Motor neuron (in vitro differentiated cells): ENCODE measurements at regions of chr4 and their contacts with region 1.

Region 1: DNA sequence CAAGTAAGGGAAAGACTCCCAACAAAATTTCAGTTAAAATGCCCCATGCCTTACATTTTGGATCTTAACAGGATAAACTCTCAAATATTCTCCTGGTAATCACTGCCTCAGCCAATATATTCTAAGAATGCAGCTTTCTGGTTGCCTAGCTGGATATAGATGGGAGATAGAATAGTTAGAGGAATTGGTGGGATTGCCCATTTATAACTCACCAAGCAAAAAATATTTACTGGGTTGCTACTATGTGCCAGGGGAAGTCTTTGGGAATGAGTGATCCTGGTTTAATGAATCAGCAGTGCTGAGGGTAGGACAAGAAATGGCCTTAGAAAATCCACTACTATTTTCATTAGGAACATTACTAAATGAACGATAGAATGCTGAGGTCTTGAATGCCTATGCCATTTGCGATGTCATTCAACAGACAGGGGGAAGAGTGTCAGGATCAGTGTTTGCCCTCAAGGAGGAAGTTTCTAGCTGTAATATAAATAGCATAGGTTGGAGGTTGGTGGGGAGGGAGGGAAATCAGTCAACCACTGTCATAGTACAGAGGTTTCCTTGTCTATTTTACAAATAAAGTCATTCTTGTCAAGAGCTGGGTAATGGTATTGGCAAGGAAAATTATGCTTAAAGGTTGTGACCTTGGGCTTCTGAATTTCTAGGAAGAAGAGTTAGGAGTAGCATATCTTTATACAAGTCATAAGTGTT is 63.5 kb downstream of the ENOPH1 start:
- ATAC-seq: no peak
- H3K4me3 ChIP-seq: no peak overlapping the region
- H3K27ac ChIP-seq: no peak overlapping the region
- H3K4me1 ChIP-seq: peaks cover under 1 to 4% of the 10 kb centered on the region in 2 donors

Region 2: DNA sequence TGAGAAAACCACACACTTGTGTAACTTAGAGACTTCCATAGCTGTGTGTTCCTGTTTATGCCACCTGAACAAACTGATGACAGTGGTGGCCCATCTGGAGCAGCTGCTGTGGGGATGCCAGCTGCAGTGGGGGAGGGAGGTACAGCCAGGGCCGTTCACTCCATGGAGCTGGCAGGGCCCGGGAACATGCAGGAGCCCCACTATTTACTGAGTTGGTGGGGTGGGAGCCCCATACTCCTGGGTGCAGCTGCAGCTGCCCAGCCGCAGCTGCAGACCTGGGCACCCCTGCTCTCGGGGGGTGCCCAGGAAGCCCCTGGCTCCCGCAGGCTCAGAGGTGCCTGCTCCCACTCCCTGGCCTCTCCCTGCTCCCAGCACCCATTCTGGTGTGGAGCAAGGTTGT is 623.6 kb before region 1 on chr4:
- in situ Hi-C with region 1: no loop called
- ATAC-seq: no peak
- H3K4me3 ChIP-seq: no peak overlapping the region
- H3K27ac ChIP-seq: no peak overlapping the region
- H3K4me1 ChIP-seq: peaks cover 18 to 29% of the 10 kb centered on the region in 2 donors

Region 3: GRCh38 chr4:82739316-82740179 is 245.7 kb after region 1 on chr4:
- in situ Hi-C with region 1: loop called in 1 of 9 experiments (anchors 25 kb)
- ATAC-seq: peak; percentile 42 to 100 (median 78)
- H3K4me3 ChIP-seq: no peak overlapping the region
- H3K27ac ChIP-seq: no peak overlapping the region
- H3K4me1 ChIP-seq: peaks cover 0 to 5% of the 10 kb centered on the region in 2 donors